HAP-1 (cell line): ENCODE measurements at regions of chr6 and their contacts with region 1.

Region 1: DNA sequence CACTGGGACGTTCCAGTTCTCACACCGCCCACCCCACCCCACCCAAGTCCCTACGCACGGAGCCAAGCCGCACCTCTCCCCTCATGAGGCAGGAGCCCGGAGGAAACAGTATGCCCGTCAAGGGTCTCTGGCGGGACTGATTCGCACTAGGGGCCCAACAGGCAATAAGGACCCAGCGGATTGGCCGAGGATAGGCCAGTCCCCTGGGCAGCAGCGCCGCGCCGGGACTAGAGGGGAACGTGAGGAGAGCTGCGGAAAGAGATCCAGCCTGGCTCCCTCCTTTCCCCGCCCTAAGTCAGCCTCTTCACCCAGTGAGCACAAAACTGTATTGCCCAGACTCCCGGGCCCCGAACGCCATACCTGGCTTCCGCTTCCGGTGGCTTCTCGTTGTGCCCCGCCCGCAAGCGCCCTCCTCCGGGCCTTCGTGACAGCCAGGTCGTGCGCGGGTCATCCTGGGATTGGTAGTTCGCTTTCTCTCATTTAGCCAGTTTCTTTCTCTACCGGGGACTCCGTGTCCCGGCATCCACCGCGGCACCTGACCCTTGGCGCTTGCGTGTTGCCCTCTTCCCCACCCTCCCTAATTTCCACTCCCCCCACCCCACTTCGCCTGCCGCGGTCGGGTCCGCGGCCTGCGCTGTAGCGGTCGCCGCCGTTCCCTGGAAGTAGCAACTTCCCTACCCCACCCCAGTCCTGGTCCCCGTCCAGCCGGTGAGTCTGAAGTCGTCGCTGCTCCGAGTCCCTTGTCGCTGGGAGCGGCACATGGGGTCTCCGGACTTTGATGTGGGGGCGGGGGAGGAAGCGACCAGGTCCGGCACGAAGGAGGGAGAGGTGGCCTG is at the start of gene CSNK2B:
- DNase-seq: peak; percentile 98 to 99
- H3K4me3 ChIP-seq: peak within 1 kb of the TSS; percentile 99
- H3K4me1 ChIP-seq: peaks cover 9% of the 10 kb centered on the region
- H3K27me3 ChIP-seq: no peaks in the 10 kb centered on the region

Region 2: GRCh38 chr6:31143148-31143547 is 522.6 kb before region 1 on chr6:
- in situ Hi-C with region 1: no loop called
- DNase-seq: no peak
- H3K4me3 ChIP-seq: no peak overlapping the region
- H3K4me1 ChIP-seq: no peaks in the 10 kb centered on the region
- H3K27me3 ChIP-seq: no peaks in the 10 kb centered on the region

Region 3: GRCh38 chr6:31969712-31970603 is 304.2 kb after region 1 on chr6:
- in situ Hi-C with region 1: loop called (anchors 10 kb)
- DNase-seq: no peak
- H3K4me3 ChIP-seq: no peak overlapping the region
- H3K4me1 ChIP-seq: peaks cover 12% of the 10 kb centered on the region
- H3K27me3 ChIP-seq: no peaks in the 10 kb centered on the region